H1 (cell line): ENCODE measurements at regions of chr16 and their contacts with region 1.

Region 1: DNA sequence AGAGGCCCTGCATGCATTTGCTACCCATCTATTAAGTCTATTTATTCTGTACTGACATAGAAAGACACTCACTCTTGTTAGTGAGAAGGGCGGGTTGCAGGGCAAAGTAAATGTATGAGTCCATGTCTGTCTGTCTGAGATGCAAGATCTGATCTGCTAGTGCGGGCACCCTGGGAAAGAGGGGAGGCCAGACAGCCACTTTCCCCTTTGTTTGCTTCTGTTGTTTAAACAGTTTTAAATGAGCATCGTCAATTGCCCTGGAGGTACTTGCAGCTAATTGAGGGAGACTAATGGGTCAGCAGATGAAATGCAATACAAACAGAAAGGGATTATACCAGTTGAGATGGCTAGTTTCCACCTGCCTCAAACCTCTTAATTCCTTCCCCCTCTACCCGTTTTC is 24.9 kb downstream of the SCNN1G start:
- DNase-seq: no peak
- H3K4me3 ChIP-seq: no peak overlapping the region
- H3K27ac ChIP-seq: no peak overlapping the region
- H3K4me1 ChIP-seq: peaks cover 3 to 22% (median 10%) of the 10 kb centered on the region in 4 experiments
- H3K27me3 ChIP-seq: no peaks in the 10 kb centered on the region
- CTCF ChIP-seq: no peak
- EP300 ChIP-seq: no peak
- POLR2A ChIP-seq: no peak
- RAD21 ChIP-seq: no peak

Region 2: GRCh38 chr16:23145186-23145585 is 62.3 kb before region 1 on chr16:
- CTCF ChIA-PET with region 1: no interaction called
- POLR2A ChIA-PET with region 1: no interaction called
- DNase-seq: no peak
- H3K4me3 ChIP-seq: peak overlapping the region in 1 of 4 experiments; percentile 36; a peak in 1 of 8 replicates
- H3K27ac ChIP-seq: no peak overlapping the region
- H3K4me1 ChIP-seq: peaks cover 8 to 18% (median 12%) of the 10 kb centered on the region in 4 experiments; a peak in 6 of 7 replicates
- H3K27me3 ChIP-seq: no peaks in the 10 kb centered on the region
- CTCF ChIP-seq: no peak
- EP300 ChIP-seq: no peak
- POLR2A ChIP-seq: no peak
- RAD21 ChIP-seq: no peak

Region 3: GRCh38 chr16:23155439-23156049 is 51.9 kb before region 1 on chr16:
- CTCF ChIA-PET with region 1: no interaction called
- POLR2A ChIA-PET with region 1: no interaction called
- DNase-seq: peak in 1 of 2 experiments; percentile 49
- H3K4me3 ChIP-seq: no peak overlapping the region
- H3K27ac ChIP-seq: no peak overlapping the region
- H3K4me1 ChIP-seq: no peaks in the 10 kb centered on the region; a peak in 1 of 7 replicates
- H3K27me3 ChIP-seq: peaks cover 0 to 3% (median 1%) of the 10 kb centered on the region in 4 experiments; a peak in 1 of 7 replicates
- CTCF ChIP-seq: peak; percentile 44 to 78 (median 73)
- EP300 ChIP-seq: no peak
- POLR2A ChIP-seq: no peak
- RAD21 ChIP-seq: peak; percentile 41 to 57; a peak in 3 of 4 replicates

Region 4: GRCh38 chr16:23217646-23218045 is 10.2 kb after region 1 on chr16:
- CTCF ChIA-PET with region 1: interaction called, 35 read pairs
- POLR2A ChIA-PET with region 1: no interaction called
- DNase-seq: no peak
- H3K4me3 ChIP-seq: no peak overlapping the region
- H3K27ac ChIP-seq: no peak overlapping the region
- H3K4me1 ChIP-seq: no peaks in the 10 kb centered on the region; a peak in 1 of 7 replicates
- H3K27me3 ChIP-seq: no peaks in the 10 kb centered on the region
- CTCF ChIP-seq: no peak
- EP300 ChIP-seq: no peak
- POLR2A ChIP-seq: no peak
- RAD21 ChIP-seq: no peak

Region 5: GRCh38 chr16:23223368-23223767 is 15.9 kb after region 1 on chr16:
- CTCF ChIA-PET with region 1: interaction called, 35 read pairs
- POLR2A ChIA-PET with region 1: no interaction called
- DNase-seq: no peak
- H3K4me3 ChIP-seq: no peak overlapping the region
- H3K27ac ChIP-seq: no peak overlapping the region
- H3K4me1 ChIP-seq: peaks cover 0 to 10% (median 8%) of the 10 kb centered on the region in 4 experiments; a peak in 5 of 7 replicates
- H3K27me3 ChIP-seq: no peaks in the 10 kb centered on the region
- CTCF ChIP-seq: no peak
- EP300 ChIP-seq: no peak
- POLR2A ChIP-seq: no peak
- RAD21 ChIP-seq: no peak

Region 6: DNA sequence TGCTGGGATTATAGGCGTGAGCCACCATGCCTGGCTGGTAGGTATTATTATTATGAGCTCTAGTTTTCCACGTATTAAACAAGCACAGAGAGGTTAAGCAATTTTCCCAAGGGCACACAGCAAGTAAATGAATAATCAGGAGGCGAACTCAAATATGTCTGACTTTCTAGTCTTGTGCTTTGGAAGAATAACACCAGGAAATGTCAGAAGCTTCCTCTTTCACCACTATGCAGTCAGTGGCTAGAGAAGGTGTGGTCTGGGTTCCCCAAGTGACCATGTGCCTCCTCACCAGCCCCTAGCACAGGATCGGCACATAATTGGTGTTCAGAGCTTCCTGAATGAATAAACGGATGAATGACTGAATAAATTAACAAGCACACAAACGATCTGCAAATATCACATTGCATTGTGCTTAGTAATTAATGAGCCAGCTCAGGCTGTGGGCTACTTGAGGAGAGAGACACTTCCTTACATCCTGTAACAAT is 73.0 kb after region 1 on chr16:
- CTCF ChIA-PET with region 1: no interaction called
- POLR2A ChIA-PET with region 1: no interaction called
- DNase-seq: no peak
- H3K4me3 ChIP-seq: no peak overlapping the region
- H3K27ac ChIP-seq: no peak overlapping the region
- H3K4me1 ChIP-seq: peaks cover 0 to 6% (median 0%) of the 10 kb centered on the region in 4 experiments; a peak in 3 of 7 replicates
- H3K27me3 ChIP-seq: no peaks in the 10 kb centered on the region
- CTCF ChIP-seq: no peak
- EP300 ChIP-seq: no peak
- POLR2A ChIP-seq: no peak
- RAD21 ChIP-seq: no peak